Activated naive CD4-positive, alpha-beta T cell treated with anti-CD3 and anti-CD28 coated beads for 36 hours (primary cell): ENCODE measurements at regions of chr1 and their contacts with region 1.

Region 1: GRCh38 chr1:200448034-200448762 is 38.4 kb upstream of the ZNF281 start:
- DNase-seq: peak; percentile 23
- H3K4me3 Mint-ChIP-seq: no peak overlapping the region
- H3K27ac Mint-ChIP-seq: peak overlapping the region; percentile 84
- H3K4me1 Mint-ChIP-seq: peaks cover 41% of the 10 kb centered on the region
- H3K27me3 Mint-ChIP-seq: peaks cover 7% of the 10 kb centered on the region

Region 2: GRCh38 chr1:199308331-199308846 is 1139.8 kb before region 1 on chr1:
- CTCF ChIA-PET with region 1: no interaction called
- intact Hi-C with region 1: loop called (anchors 1 kb)
- DNase-seq: no peak
- H3K4me3 Mint-ChIP-seq: no peak overlapping the region
- H3K27ac Mint-ChIP-seq: peak overlapping the region; percentile 51
- H3K4me1 Mint-ChIP-seq: peaks cover 31% of the 10 kb centered on the region
- H3K27me3 Mint-ChIP-seq: peaks cover 25% of the 10 kb centered on the region

Region 3: DNA sequence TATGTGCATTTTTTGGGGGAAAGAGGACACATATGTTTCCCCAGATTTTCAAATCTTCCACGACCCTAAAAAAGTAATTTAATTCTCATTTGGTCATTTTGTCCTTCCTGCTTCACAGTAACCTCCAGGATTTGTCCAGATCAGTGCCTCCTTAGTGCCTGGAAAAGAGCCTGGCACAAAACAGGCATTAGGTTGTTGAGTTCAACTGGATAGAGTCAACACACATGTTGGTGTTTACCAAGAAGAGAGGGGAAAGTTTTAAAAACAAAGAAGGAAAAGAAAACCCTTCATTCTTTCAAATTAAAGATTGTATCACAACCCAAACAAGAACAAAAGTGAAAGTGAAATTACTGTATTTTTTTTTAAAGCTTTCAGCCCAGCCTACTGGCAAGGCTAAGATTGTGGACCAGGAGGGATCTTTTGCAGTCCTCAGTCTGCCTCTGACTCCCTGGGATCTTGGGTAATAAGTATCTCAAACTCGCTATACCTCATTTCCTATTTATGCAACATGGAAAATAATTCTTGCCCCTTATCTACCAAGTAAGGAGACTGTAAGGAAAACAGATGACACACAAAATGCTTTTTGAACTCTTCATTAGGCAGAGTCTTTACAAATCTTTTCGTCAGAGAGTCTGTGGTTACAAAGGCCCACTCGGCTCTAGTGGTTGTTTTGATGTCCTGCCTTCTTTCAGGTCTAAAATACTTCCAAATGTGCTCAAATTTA is 96.2 kb before region 1 on chr1:
- CTCF ChIA-PET with region 1: no interaction called
- intact Hi-C with region 1: loop called (anchors 1 kb)
- DNase-seq: peak; percentile 46
- H3K4me3 Mint-ChIP-seq: peak overlapping the region; percentile 29
- H3K27ac Mint-ChIP-seq: peak overlapping the region; percentile 43
- H3K4me1 Mint-ChIP-seq: peaks cover 33% of the 10 kb centered on the region
- H3K27me3 Mint-ChIP-seq: no peaks in the 10 kb centered on the region

Region 4: GRCh38 chr1:200473698-200474371 is 25.6 kb after region 1 on chr1:
- CTCF ChIA-PET with region 1: no interaction called
- intact Hi-C with region 1: loop called (anchors 1 kb)
- DNase-seq: peak; percentile 36
- H3K4me3 Mint-ChIP-seq: no peak overlapping the region
- H3K27ac Mint-ChIP-seq: peak overlapping the region; percentile 60
- H3K4me1 Mint-ChIP-seq: peaks cover 35% of the 10 kb centered on the region
- H3K27me3 Mint-ChIP-seq: peaks cover 23% of the 10 kb centered on the region

Region 5: DNA sequence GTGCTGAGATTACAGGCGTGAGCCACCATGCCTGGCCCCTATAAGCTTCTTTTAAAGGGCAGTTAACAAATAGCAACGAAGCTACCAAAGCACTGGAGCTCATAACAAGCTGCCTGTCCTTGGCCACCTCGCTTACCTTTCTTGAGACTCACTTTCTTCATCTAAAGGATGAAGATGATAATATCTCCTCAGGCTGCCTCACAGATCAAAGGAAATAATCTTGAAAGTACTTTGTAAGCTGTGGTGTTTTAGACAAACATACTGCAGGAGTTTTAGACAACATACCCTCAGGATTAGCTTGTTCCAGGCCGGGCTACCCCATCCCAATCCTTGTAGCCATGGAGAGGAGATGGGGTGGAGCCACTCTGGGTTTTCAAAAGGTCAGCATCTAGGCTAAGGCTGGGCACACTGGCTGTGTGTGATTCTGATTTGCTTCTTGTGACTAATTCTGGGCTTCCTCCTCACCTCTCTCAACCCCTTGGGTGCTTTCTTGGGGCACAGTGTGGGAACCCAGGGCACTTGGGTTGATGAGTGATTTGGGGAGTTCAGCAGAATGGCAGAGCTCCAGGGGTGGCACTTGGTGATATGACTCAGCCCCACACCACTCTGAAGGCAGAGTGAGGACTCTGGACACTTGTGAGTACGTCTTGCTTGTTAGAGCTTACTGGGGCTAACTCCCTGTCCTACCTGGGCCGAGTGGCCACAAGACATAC is 429.8 kb after region 1 on chr1:
- CTCF ChIA-PET with region 1: no interaction called
- intact Hi-C with region 1: loop called (anchors 10 kb)
- DNase-seq: peak; percentile 76
- H3K4me3 Mint-ChIP-seq: no peak overlapping the region
- H3K27ac Mint-ChIP-seq: no peak overlapping the region
- H3K4me1 Mint-ChIP-seq: peaks cover 22% of the 10 kb centered on the region
- H3K27me3 Mint-ChIP-seq: peaks cover 24% of the 10 kb centered on the region